Sigmoid colon (tissue), 7 donors: ENCODE measurements at regions of chr11 and their contacts with region 1.

Region 1: DNA sequence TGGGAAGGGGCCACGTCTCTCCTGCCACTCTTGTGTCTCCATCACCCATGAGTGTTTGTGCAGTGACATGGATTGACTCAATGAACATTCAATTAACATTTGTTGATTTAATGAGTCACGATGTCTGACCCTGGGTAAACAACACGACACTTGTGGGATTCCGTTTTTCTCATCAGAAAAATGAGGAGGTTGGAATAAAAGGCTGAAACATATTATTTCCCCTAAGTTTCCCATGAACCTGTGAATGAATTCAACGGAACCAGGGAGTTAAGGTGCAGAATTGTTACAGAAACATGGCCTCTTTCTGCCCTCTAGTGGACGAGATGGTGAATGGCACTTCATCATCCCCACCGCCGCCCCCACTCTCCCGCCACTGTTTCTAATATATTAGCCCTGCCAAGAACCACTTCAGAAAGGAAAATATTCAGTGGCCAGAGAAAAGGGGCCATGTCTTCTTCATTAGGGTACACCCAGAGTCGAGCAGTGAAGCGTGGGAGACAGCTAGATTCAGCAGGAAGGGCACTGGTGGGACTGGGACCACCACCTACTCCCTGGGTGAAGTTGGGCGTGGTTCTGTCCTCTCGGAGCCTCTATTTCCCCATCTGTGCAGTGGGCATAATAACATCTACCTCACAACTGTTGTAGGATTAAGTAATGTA is 46.3 kb upstream of the SYT13 start:
- DNase-seq: peak; percentile 72
- H3K4me3 ChIP-seq: peak overlapping the region in 2 of 4 donors; percentile 22 to 26
- H3K27ac ChIP-seq: peak overlapping the region; percentile 21 to 73 (median 58)
- H3K4me1 ChIP-seq: peaks cover 0 to 12% (median 10%) of the 10 kb centered on the region in 4 donors
- H3K27me3 ChIP-seq: no peaks in the 10 kb centered on the region
- CTCF ChIP-seq: peak in 3 of 4 experiments; percentile 30 to 84 (median 41)
- EP300 ChIP-seq: no peak
- POLR2A ChIP-seq: no peak

Region 2: DNA sequence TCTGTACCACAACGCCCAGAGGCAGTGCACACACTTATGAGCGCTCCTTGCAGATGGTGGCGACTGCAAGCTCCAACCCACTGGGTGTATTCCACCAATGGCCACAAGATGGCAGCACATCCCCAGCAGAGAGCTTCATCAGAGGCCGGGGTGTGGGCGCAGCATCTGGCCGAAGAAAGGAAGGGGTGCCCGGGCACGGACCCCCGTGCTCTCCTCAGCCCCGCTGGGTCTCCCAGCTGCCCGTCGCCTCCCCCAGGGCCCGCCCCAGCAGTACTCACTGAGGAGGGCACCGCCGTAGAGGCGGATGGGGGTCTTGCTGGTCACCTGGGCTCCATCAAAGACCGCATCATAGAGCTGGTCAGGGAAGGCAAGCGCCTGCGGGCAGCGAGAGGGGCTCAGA is 395.9 kb before region 1 on chr11:
- intact Hi-C with region 1: loop called (anchors 5 kb)
- DNase-seq: peak; percentile 89
- H3K4me3 ChIP-seq: no peak overlapping the region
- H3K27ac ChIP-seq: no peak overlapping the region
- H3K4me1 ChIP-seq: peaks cover 0 to 16% (median 8%) of the 10 kb centered on the region in 4 donors
- H3K27me3 ChIP-seq: no peaks in the 10 kb centered on the region
- CTCF ChIP-seq: peak; percentile 85 to 95 (median 95)
- EP300 ChIP-seq: no peak
- POLR2A ChIP-seq: no peak

Region 3: DNA sequence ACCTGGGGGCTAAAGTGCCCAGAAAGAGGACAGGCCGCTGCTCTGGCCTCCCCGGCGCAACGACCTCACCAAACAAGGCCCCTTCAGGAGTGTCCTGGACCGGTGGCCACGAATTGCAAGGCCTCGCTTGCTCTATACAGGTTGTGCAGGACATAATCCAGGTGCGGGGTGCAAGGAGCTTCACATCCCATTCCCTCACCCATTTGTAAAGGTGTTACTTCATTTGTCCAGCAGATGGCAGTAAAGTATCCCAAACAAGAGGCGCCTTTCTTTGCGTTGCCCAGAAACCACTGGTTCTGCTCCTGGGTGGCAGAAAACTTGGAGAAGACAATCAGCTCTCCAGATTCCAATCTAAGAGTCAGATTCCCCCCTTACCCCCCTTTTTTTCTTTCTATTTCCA is 221.8 kb before region 1 on chr11:
- intact Hi-C with region 1: loop called (anchors 1 kb)
- DNase-seq: peak; percentile 76
- H3K4me3 ChIP-seq: no peak overlapping the region
- H3K27ac ChIP-seq: no peak overlapping the region
- H3K4me1 ChIP-seq: no peaks in the 10 kb centered on the region
- H3K27me3 ChIP-seq: peaks cover 0 to 15% (median 0%) of the 10 kb centered on the region in 3 donors
- CTCF ChIP-seq: peak; percentile 70 to 81 (median 72)
- EP300 ChIP-seq: no peak
- POLR2A ChIP-seq: no peak

Region 4: GRCh38 chr11:45209891-45210699 is 122.3 kb before region 1 on chr11:
- intact Hi-C with region 1: no loop called
- DNase-seq: peak; percentile 98
- H3K4me3 ChIP-seq: peak overlapping the region in 3 of 4 donors; percentile 7 to 29 (median 18)
- H3K27ac ChIP-seq: peak overlapping the region; percentile 87 to 95 (median 88)
- H3K4me1 ChIP-seq: peaks cover 0 to 47% (median 42%) of the 10 kb centered on the region in 4 donors
- H3K27me3 ChIP-seq: no peaks in the 10 kb centered on the region
- CTCF ChIP-seq: no peak
- EP300 ChIP-seq: peak in 3 of 4 donors; percentile 76 to 95 (median 84)
- POLR2A ChIP-seq: peak in 1 of 2 donors; percentile 44

Region 5: DNA sequence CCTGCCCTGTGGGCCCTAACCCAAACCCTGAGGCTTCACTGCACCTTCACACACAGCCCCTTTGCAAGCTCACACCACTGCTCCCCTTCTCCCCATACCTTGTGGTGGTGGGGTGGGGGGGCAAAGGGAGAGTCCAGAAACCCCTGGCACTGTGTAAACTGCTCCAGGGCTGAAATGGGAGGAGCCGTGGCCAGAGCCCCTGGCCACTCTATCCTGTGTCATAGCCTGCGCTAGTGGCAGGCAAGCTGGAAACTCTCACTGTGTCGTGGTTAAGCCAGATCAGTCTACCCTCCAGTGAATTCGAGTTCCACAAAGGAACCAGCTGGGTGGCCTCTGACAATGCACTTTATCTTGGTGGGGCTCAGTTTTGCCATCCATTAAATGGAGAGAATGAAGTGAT is 37.9 kb before region 1 on chr11:
- intact Hi-C with region 1: loop called (anchors 5 kb)
- DNase-seq: no peak
- H3K4me3 ChIP-seq: no peak overlapping the region
- H3K27ac ChIP-seq: no peak overlapping the region
- H3K4me1 ChIP-seq: no peaks in the 10 kb centered on the region
- H3K27me3 ChIP-seq: peaks cover 0 to 7% (median 0%) of the 10 kb centered on the region in 3 donors
- CTCF ChIP-seq: no peak
- EP300 ChIP-seq: no peak
- POLR2A ChIP-seq: no peak